Common myeloid progenitor, CD34-positive (primary cell): ENCODE measurements at regions of chr19 and their contacts with region 1.

Region 1: GRCh38 chr19:11324079-11324661 is 15.3 kb downstream of the RAB3D start:
- DNase-seq: peak; percentile 95 to 98 (median 98)
- H3K4me3 ChIP-seq: peak overlapping the region in 4 of 7 experiments; percentile 36 to 54 (median 48)
- H3K27ac ChIP-seq: peak overlapping the region; percentile 87 to 94
- H3K4me1 ChIP-seq: peaks cover 26 to 73% (median 70%) of the 10 kb centered on the region in 4 experiments
- H3K27me3 ChIP-seq: no peaks in the 10 kb centered on the region

Region 2: DNA sequence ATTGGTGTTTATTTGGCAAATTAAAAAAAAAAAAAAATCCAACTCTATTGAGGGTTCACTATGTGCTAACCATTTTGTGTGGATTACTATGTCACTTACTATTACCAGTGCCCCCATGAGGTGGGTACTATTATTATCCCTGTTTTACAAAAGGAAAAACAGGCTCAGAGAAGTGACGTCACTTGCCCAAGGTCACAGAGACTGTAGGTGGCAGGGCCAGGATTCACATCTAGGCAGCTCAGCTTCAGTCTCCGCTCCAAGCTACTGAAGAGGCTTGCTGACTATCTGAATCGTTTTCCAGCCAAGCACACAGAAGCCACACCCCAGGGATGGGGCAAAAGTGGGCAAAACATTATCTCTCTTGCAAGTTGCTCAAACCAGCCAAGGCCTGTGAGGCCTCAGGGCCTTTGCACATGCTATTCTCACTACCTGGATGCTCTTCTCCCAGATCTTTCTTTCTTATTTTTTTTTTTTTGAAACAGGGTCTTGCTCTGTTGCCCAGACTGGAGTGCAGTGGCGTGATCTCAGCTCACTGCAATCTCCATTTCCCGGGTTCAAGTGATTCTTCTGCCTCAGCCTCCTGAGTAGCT is 89.6 kb before region 1 on chr19:
- CTCF ChIA-PET with region 1: no interaction called
- POLR2A ChIA-PET with region 1: no interaction called
- DNase-seq: peak in 1 of 3 donors; percentile 26
- H3K4me3 ChIP-seq: no peak overlapping the region
- H3K27ac ChIP-seq: no peak overlapping the region
- H3K4me1 ChIP-seq: no peaks in the 10 kb centered on the region
- H3K27me3 ChIP-seq: peaks cover 0 to 3% (median 0%) of the 10 kb centered on the region in 5 experiments

Region 3: DNA sequence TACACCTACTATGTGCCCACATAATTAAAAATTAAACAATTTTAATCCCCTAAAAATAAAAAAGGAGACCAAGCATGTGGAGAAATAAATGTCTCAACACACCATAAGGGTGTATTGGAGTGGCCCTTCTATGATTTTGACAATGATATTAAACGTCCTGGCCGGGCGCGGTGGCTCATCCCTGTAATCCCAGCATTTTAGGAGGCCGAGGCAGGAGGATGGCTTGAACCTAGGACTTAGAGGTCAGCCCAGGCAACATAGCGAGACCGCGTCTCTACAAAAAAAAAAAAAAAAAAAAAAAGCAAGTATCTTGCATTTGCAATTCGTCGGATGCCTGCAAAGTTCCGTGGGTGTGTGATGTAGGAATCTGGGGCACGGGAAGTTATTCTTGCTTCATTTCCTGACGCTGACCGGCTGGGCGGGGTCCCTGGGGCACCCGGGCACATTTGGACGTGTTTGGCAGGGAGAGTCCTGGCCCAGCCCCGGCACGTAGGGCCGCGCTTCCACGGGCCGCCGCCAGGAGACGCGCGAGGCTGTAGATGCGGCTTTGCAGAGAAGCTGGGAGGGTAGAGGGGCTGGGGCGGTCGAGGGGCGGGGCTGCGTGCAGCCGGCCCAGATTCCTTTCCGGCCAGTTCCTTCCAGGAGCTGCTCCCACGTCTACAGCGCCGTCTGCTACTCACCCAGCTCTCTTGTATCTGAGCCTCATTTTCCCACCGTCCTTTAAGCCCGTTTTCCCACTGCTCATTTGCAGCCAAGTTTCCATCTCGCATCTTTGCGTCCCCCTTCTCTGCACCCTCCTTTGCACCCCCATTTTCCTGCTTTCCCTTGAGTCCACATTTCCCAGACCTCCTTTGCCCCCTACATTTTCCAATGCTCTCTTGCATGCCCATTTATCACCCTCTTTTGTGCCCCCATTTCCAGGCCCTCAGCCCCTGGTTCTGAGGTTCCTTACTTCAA is 30.5 kb before region 1 on chr19:
- CTCF ChIA-PET with region 1: interaction called, 8 read pairs
- POLR2A ChIA-PET with region 1: interaction called, 10 read pairs
- DNase-seq: peak; percentile 89 to 91 (median 90)
- H3K4me3 ChIP-seq: peak overlapping the region in 5 of 7 experiments; percentile 3 to 76 (median 53)
- H3K27ac ChIP-seq: no peak overlapping the region
- H3K4me1 ChIP-seq: peaks cover 2 to 23% (median 22%) of the 10 kb centered on the region in 4 experiments
- H3K27me3 ChIP-seq: peaks cover 0 to 4% (median 0%) of the 10 kb centered on the region in 5 experiments

Region 4: GRCh38 chr19:11339254-11340098 is 15.3 kb after region 1 on chr19 and contains the start of gene RAB3D:
- CTCF ChIA-PET with region 1: interaction called, 18 read pairs
- POLR2A ChIA-PET with region 1: interaction called, 15 read pairs
- DNase-seq: peak; percentile 82 to 88 (median 87)
- H3K4me3 ChIP-seq: peak within 1 kb of the TSS; percentile 57 to 90 (median 77)
- H3K27ac ChIP-seq: peak within 1 kb of the TSS in 1 of 2 experiments; percentile 34
- H3K4me1 ChIP-seq: peaks cover 10 to 49% (median 47%) of the 10 kb centered on the region in 4 experiments
- H3K27me3 ChIP-seq: no peaks in the 10 kb centered on the region

Region 5: GRCh38 chr19:11346092-11346940 is 22.1 kb after region 1 on chr19 and contains the starts of genes CCDC159 and TMEM205:
- CTCF ChIA-PET with region 1: interaction called, 11 read pairs
- POLR2A ChIA-PET with region 1: interaction called, 5 read pairs
- DNase-seq: peak; percentile 99 to 100 (median 100)
- H3K4me3 ChIP-seq: peak within 1 kb of the TSS; percentile 51 to 92 (median 78)
- H3K27ac ChIP-seq: peak within 1 kb of the TSS; percentile 72 to 89
- H3K4me1 ChIP-seq: peaks cover 7 to 47% (median 41%) of the 10 kb centered on the region in 4 experiments
- H3K27me3 ChIP-seq: no peaks in the 10 kb centered on the region